ENCODE measurements at regions of chr3 and their contacts with region 1.

Region 1: GRCh38 chr3:196195664-196196265 is 15.4 kb downstream of the ZDHHC19 start:
- DNase-seq: no peak
- H3K4me3 ChIP-seq: no peak overlapping the region
- H3K27ac ChIP-seq: no peak overlapping the region
- H3K4me1 ChIP-seq: peaks cover 10 to 41% (median 16%) of the 10 kb centered on the region in 3 donors
- H3K27me3 ChIP-seq: no peaks in the 10 kb centered on the region
- CTCF ChIP-seq: no peak
- POLR2A ChIP-seq: no peak

Region 2: DNA sequence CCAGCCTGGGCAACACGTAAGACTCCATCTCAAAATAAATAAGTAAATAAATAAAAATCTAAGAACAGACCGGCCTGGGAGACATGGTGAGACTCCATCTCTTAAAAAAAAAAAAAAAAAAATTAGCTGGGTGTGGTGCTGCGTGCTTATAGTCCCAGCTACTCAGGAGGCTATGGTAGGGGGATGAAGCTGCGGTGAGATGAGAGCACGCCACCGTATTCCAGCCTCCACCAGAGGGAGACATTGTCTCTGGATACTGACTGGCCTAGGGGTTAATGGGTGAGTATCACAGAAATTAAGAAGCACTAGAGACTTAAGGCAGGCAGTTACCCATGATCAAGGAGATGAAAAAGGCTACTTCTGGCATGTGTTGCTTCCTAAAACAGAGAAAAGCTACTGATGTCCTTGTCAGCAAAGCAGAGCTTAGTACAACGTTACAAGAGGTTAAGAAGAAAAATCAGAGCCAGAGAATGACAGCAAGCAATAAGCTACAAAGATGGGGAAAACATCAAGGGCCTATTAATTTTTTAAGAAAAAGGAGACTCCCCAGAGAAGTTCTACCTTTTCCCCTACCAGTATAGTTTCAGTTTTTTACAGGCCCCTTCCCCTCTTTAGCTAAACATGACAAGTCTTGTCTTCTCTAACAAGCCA is 122.5 kb before region 1 on chr3:
- intact Hi-C with region 1: loop called (anchors 2 kb)
- DNase-seq: no peak
- H3K4me3 ChIP-seq: no peak overlapping the region
- H3K27ac ChIP-seq: no peak overlapping the region
- H3K4me1 ChIP-seq: peaks cover 0 to 13% (median 0%) of the 10 kb centered on the region in 3 donors
- H3K27me3 ChIP-seq: no peaks in the 10 kb centered on the region
- CTCF ChIP-seq: peak; percentile 58 to 85 (median 80)
- POLR2A ChIP-seq: no peak